ENCODE measurements at regions of chr16 and their contacts with region 1.

Region 1: DNA sequence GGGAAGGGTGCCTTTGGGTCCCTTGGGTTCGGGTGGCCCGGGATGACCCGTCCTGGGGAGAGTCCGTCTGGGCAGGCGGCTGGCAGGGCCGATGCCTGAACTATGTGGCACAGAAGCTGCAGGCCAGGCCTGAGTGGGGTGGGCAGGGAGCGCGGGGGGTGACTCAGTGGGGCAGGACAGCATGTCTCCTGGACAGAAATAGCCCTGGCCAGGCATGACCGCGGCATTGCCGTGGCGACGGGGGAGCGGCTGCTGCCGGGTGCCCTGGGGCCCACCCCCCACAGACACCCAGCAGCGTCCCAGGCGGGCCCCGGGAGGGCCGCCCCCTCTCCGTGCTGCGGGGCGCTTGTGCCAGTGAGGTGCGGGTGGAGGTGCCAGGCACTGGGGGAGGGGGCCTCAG is 1.8 kb upstream of the C1QTNF8 start:
- DNase-seq: peak; percentile 41 to 94 (median 60)
- H3K4me3 ChIP-seq: no peak overlapping the region
- H3K27ac ChIP-seq: peak overlapping the region in 1 of 5 donors; percentile 41
- H3K4me1 ChIP-seq: peaks cover 0 to 10% of the 10 kb centered on the region in 2 donors
- H3K27me3 ChIP-seq: no peaks in the 10 kb centered on the region
- CTCF ChIP-seq: no peak
- POLR2A ChIP-seq: no peak

Region 2: DNA sequence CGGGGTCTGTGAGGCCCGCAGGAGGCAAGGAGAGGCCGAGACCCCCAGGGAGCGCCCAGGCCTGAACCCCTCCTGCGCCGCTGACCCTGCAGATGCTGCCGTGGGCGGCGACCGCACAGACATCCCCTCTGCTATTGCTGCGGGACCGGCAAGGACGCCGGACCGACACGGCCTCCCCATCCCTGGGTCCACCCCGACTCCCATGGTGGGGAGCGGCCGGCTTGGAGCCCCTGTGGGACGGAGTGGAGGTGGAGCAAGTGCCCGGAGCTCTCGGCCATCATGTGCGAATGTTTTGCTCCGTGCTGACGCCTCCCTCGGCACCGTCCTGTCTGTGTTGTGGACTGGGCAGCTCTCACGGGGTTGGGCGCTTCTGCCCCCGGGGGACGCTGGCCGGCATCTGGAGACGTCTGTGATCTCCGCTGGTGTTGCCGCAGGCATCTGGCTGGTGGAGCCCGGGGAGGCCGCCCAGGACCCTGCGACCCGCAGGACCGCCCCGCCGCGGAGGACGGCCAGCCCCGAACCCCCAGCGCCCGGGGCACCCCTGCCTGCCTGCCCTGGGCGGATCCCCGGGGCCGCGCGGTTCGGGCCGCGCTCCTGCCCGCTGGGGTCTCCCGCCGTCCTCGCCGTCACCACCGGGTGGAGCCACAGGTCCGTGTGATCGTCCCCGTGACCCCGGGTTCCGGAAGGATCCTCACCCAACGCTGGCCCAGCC is 284.4 kb before region 1 on chr16:
- intact Hi-C with region 1: loop called in 1 of 2 experiments (anchors 5 kb)
- DNase-seq: peak in 5 of 7 donors; percentile 50 to 62 (median 57)
- H3K4me3 ChIP-seq: peak overlapping the region in 1 of 4 donors; percentile 39
- H3K27ac ChIP-seq: no peak overlapping the region
- H3K4me1 ChIP-seq: peaks cover 0 to 5% of the 10 kb centered on the region in 2 donors
- H3K27me3 ChIP-seq: peaks cover 28% of the 10 kb centered on the region
- CTCF ChIP-seq: peak in 5 of 6 experiments; percentile 42 to 82 (median 57)
- POLR2A ChIP-seq: no peak

Region 3: GRCh38 chr16:1125471-1125870 is 27.7 kb after region 1 on chr16:
- intact Hi-C with region 1: no loop called
- DNase-seq: peak in 1 of 7 donors; percentile 87
- H3K4me3 ChIP-seq: no peak overlapping the region
- H3K27ac ChIP-seq: no peak overlapping the region
- H3K4me1 ChIP-seq: no peaks in the 10 kb centered on the region
- H3K27me3 ChIP-seq: no peaks in the 10 kb centered on the region
- CTCF ChIP-seq: no peak
- POLR2A ChIP-seq: no peak

Measured in adrenal gland (tissue), 19 donors.